Gastrocnemius medialis (tissue), 4 donors: ENCODE measurements at regions of chr14 and their contacts with region 1.

Region 1: GRCh38 chr14:59055439-59056045 is 132.9 kb upstream of the DAAM1 start:
- DNase-seq: no peak
- ATAC-seq: no peak
- H3K4me3 ChIP-seq: no peak overlapping the region
- H3K27ac ChIP-seq: no peak overlapping the region
- H3K4me1 ChIP-seq: no peaks in the 10 kb centered on the region
- H3K27me3 ChIP-seq: no peaks in the 10 kb centered on the region
- CTCF ChIP-seq: peak in 4 of 5 experiments; percentile 21 to 70 (median 50)
- POLR2A ChIP-seq: no peak

Region 2: GRCh38 chr14:58501214-58501816 is 554.2 kb before region 1 on chr14:
- in situ Hi-C with region 1: loop called (anchors 5 to 25 kb)
- intact Hi-C with region 1: loop called (anchors 1 kb)
- DNase-seq: no peak
- ATAC-seq: peak in 1 of 2 donors; percentile 51
- H3K4me3 ChIP-seq: no peak overlapping the region
- H3K27ac ChIP-seq: no peak overlapping the region
- H3K4me1 ChIP-seq: no peaks in the 10 kb centered on the region
- H3K27me3 ChIP-seq: no peaks in the 10 kb centered on the region
- CTCF ChIP-seq: peak; percentile 42 to 75 (median 67)
- POLR2A ChIP-seq: no peak